Thyroid gland (tissue), 4 donors: ENCODE measurements at regions of chr1 and their contacts with region 1.

Region 1: GRCh38 chr1:19485362-19486187 is at the start of gene CAPZB:
- DNase-seq: peak; percentile 95
- H3K4me3 ChIP-seq: peak within 1 kb of the TSS; percentile 77 to 100 (median 98)
- H3K27ac ChIP-seq: peak within 1 kb of the TSS; percentile 98 to 99 (median 98)
- H3K4me1 ChIP-seq: peaks cover 48 to 57% of the 10 kb centered on the region in 2 donors
- H3K27me3 ChIP-seq: no peaks in the 10 kb centered on the region
- CTCF ChIP-seq: no peak
- POLR2A ChIP-seq: peak; percentile 71 to 91
- total RNA-seq, gene CAPZB: 75.4 to 116 (median 93.1) TPM

Region 2: DNA sequence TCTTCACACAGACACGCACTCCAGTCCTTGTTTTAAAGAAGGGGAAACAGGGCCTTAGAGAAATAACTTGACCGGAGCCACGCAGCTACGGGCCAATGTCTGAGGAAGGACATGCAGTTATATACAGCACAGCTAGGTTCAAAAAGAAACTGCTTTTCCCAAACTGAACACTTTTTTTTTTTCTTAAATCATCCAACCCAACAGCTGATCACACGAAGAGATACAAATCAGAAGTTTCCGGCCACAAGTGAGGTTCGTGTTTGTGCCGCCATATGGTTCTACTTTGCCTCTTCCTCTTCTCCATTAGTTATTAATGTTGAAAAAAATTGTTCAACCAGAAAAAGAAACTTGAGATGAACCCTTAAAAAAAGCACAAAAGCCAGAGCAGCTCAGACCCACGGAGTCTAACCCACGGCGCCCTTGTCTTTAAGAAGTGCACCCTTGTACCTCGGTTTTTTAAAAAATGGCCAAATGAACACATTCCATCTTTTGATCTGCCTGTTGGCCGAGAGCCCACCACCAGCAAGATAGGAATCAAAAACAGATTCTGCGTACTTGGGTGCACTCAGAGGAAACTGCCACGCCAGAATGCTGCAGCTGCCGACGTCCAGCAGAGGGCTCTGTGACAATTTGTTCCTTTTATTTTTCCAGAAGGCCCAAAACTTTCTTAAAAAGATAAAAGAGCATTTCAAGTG is 94.5 kb before region 1 on chr1:
- intact Hi-C with region 1: loop called (anchors 10 kb)
- DNase-seq: peak; percentile 79 to 85
- H3K4me3 ChIP-seq: no peak overlapping the region
- H3K27ac ChIP-seq: peak overlapping the region; percentile 56 to 74 (median 69)
- H3K4me1 ChIP-seq: peaks cover 44 to 56% of the 10 kb centered on the region in 2 donors
- H3K27me3 ChIP-seq: no peaks in the 10 kb centered on the region
- CTCF ChIP-seq: peak; percentile 78 to 90 (median 86)
- POLR2A ChIP-seq: no peak

Region 3: GRCh38 chr1:19405195-19405760 is 80.3 kb before region 1 on chr1:
- intact Hi-C with region 1: no loop called
- DNase-seq: no peak
- H3K4me3 ChIP-seq: no peak overlapping the region
- H3K27ac ChIP-seq: no peak overlapping the region
- H3K4me1 ChIP-seq: peaks cover 24 to 38% of the 10 kb centered on the region in 2 donors
- H3K27me3 ChIP-seq: no peaks in the 10 kb centered on the region
- CTCF ChIP-seq: no peak
- POLR2A ChIP-seq: no peak

Region 4: DNA sequence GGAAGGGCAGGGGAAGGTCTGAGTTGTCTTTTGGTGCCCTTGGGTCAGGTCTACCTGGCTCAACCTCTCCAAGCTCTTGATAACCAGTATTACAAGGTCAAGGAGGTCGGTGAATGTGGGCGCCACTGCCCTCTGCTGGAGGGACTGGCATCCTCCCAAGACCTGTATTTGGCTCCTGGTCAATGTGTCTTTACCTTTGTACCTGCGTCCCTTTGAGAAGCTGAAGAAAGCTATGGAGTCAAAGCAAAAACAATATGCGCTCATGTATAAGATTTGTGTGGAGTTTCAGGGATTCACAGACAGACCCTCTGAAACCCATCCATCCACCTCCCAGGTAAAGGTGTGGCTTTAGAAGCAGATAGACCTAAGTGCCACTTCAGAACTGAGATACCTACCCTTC is 96.7 kb after region 1 on chr1:
- intact Hi-C with region 1: loop called (anchors 10 kb)
- DNase-seq: peak; percentile 77 to 83
- H3K4me3 ChIP-seq: no peak overlapping the region
- H3K27ac ChIP-seq: no peak overlapping the region
- H3K4me1 ChIP-seq: peaks cover 0 to 7% of the 10 kb centered on the region in 2 donors
- H3K27me3 ChIP-seq: no peaks in the 10 kb centered on the region
- CTCF ChIP-seq: peak in 5 of 6 experiments; percentile 48 to 77 (median 73)
- POLR2A ChIP-seq: no peak

Region 5: GRCh38 chr1:19643602-19644394 is 158.2 kb after region 1 on chr1 and contains the start of gene NBL1:
- intact Hi-C with region 1: loop called (anchors 10 kb)
- DNase-seq: peak; percentile 63 to 69
- H3K4me3 ChIP-seq: peak within 1 kb of the TSS in 2 of 3 donors; percentile 42 to 58
- H3K27ac ChIP-seq: peak within 1 kb of the TSS; percentile 62 to 82 (median 77)
- H3K4me1 ChIP-seq: peaks cover 0 to 38% of the 10 kb centered on the region in 2 donors
- H3K27me3 ChIP-seq: no peaks in the 10 kb centered on the region
- CTCF ChIP-seq: no peak
- POLR2A ChIP-seq: peak in 1 of 2 donors; percentile 53
- total RNA-seq, gene NBL1: 29.4 to 70.4 (median 43.6) TPM